Esophagus squamous epithelium (tissue), 5 donors: ENCODE measurements at regions of chr4 and their contacts with region 1.

Region 1: DNA sequence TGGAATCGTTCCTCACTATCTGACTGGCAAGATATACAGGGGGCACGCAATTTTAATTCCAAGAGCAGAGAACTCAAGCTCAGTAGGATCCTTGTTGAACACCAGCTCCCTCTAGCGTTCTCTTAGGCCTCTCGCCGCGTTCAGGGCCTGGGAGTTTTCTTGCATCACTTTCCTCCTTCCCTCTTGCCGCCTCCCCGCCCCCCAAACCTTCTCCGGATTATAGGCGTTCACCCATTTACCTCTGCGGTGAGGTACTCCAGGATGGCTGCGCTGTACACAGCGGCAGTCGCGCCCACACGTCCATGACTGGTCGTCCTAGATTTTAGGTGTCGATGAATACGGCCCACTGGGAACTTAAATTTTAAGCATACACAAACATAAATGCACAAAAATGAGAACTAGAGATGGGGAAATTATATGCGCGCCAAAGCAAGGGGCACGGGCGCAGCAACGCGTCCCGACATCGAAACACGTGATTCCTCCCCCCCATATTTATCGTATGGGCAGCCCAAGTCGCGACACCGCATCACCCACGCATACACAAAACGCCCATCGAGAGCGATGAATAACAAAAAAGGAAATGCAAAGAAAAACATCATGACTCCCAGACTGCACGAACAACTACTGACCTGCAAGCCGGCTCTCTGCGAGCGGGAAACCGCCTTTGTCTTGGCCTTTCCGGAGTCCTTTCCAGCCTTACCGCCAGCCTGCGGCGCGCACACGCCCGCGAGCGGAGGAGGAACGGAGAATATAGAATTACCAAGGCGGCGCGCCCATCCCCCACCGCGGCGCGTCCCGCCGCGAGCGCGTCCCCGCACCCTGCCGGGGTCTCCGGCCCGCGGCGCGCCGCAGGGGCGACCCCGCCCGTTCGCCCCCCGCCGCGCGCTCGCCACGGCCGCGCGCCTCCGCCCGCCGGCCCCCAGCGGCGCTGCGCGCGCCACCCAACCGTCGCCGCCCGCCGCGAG is 759 bp downstream of the H2AZ1 start:
- DNase-seq: peak; percentile 68
- H3K4me3 ChIP-seq: peak overlapping the region; percentile 59 to 94 (median 82)
- H3K27ac ChIP-seq: peak overlapping the region; percentile 88 to 98 (median 98)
- H3K4me1 ChIP-seq: peaks cover 16 to 47% (median 23%) of the 10 kb centered on the region in 3 donors
- H3K27me3 ChIP-seq: no peaks in the 10 kb centered on the region
- CTCF ChIP-seq: peak; percentile 84 to 92 (median 88)
- POLR2A ChIP-seq: peak in 1 of 4 donors; percentile 48

Region 2: GRCh38 chr4:99563310-99564186 is 385.8 kb before region 1 on chr4 and contains the start of gene TRMT10A:
- intact Hi-C with region 1: loop called (anchors 5 kb)
- DNase-seq: peak; percentile 84
- H3K4me3 ChIP-seq: peak within 1 kb of the TSS; percentile 55 to 85 (median 73)
- H3K27ac ChIP-seq: peak within 1 kb of the TSS; percentile 94 to 98 (median 96)
- H3K4me1 ChIP-seq: peaks cover 0 to 12% (median 3%) of the 10 kb centered on the region in 3 donors
- H3K27me3 ChIP-seq: peaks cover 0 to under 1% (median 0%) of the 10 kb centered on the region in 4 donors
- CTCF ChIP-seq: peak in 3 of 6 experiments; percentile 2 to 30 (median 22)
- POLR2A ChIP-seq: peak in 2 of 4 donors; percentile 18 to 68
- total RNA-seq, gene TRMT10A: 2.7 to 12.2 (median 6.3) TPM

Region 3: DNA sequence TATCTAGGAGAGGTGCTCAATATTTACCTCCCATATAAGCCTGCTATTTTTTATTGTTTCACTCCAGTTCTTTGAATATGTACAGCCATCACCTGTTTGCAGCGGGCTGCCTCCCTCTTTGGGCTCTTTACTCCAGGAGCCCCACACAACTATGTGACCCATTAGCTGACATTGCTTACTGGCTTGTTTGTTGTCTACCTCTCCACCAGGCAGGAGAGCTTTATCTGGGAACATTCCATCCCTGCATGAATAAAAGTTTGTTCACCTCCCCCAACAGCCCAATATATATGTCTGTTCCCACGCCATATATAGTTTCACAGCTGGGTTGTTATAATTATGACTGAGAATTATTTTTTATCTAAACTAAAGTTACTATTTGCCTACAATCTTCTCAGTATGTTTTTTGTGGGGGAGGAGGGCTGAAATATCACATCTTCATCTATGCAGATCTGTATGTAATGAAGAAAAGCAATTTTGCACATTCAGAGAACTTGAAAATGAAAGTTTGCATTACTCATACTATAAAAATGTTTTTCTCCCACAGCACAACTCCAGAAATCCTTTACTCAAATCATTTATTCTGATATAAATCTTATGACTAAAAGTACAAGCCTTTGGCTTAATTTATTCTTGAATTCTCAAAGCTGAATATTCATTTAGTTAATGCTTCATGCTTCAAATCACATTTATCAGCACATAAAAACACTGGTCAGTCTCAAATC is 193.9 kb before region 1 on chr4:
- intact Hi-C with region 1: no loop called
- DNase-seq: no peak
- H3K4me3 ChIP-seq: no peak overlapping the region
- H3K27ac ChIP-seq: no peak overlapping the region
- H3K4me1 ChIP-seq: peaks cover 0 to 4% (median 0%) of the 10 kb centered on the region in 3 donors
- H3K27me3 ChIP-seq: no peaks in the 10 kb centered on the region
- CTCF ChIP-seq: no peak
- POLR2A ChIP-seq: no peak

Region 4: GRCh38 chr4:99894161-99894997 is 54.9 kb before region 1 on chr4 and contains the start of gene LAMTOR3:
- intact Hi-C with region 1: loop called (anchors 10 kb)
- DNase-seq: peak; percentile 71
- H3K4me3 ChIP-seq: peak within 1 kb of the TSS; percentile 72 to 95 (median 80)
- H3K27ac ChIP-seq: peak within 1 kb of the TSS; percentile 93 to 96 (median 93)
- H3K4me1 ChIP-seq: peaks cover 9 to 53% (median 17%) of the 10 kb centered on the region in 3 donors
- H3K27me3 ChIP-seq: no peaks in the 10 kb centered on the region
- CTCF ChIP-seq: no peak
- POLR2A ChIP-seq: peak in 2 of 4 donors; percentile 19 to 60
- total RNA-seq, gene LAMTOR3: 36.0 to 61.0 (median 49.9) TPM

Region 5: GRCh38 chr4:100022792-100023222 is 73.5 kb after region 1 on chr4:
- intact Hi-C with region 1: no loop called
- DNase-seq: no peak
- H3K4me3 ChIP-seq: no peak overlapping the region
- H3K27ac ChIP-seq: no peak overlapping the region
- H3K4me1 ChIP-seq: no peaks in the 10 kb centered on the region
- H3K27me3 ChIP-seq: no peaks in the 10 kb centered on the region
- CTCF ChIP-seq: no peak
- POLR2A ChIP-seq: no peak